ENCODE measurements at regions of chr1 and their contacts with region 1.

Region 1: DNA sequence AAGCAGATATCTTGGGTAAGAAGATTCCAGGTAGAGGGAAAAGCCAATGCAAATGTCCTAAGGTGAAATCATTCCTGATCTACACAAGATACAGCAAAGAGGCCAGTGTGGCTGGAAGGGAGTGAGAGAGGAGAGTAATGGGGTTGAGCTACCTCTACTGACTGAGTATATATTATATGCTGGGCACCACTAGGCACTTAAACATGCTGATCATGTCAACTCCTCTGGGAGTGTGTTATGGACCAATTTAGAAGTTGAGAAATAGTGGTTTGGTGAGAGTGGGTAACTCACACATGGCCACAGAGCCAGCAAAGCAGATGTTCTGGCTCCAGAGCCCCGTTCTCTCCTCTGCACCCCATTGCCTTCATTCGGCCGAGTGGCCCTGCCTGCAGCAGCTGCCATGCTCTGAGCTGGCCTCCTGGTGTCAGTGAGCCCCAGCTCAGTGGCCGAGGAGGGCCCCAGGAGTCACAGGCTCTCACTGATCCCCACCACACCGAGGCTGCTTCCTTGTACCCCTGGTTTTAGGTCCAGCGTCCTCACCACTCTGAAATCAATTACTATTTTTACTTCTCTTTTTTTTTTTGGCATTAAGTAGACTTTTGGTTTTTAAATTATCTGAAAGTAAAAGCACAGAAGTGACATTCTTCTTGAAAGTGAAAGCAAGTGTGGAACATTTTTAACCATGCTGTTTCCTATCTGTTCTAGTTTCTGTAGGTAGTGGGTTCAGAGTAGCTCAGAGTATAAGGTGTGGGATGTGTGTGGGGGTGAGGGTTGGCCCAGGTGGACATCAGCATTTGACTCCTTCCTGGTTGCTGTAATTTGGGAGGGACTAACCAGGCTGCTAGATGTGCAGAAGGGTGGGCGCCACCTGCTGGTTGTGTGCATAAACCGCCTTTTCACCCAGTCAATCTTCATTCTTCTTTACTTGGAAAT is 45.8 kb upstream of the CRNN start:
- DNase-seq: peak; percentile 81
- H3K4me3 Mint-ChIP-seq: peak overlapping the region; percentile 60
- H3K27ac Mint-ChIP-seq: peak overlapping the region; percentile 85
- H3K4me1 Mint-ChIP-seq: peaks cover 32% of the 10 kb centered on the region
- H3K27me3 Mint-ChIP-seq: peaks cover 10% of the 10 kb centered on the region

Region 2: DNA sequence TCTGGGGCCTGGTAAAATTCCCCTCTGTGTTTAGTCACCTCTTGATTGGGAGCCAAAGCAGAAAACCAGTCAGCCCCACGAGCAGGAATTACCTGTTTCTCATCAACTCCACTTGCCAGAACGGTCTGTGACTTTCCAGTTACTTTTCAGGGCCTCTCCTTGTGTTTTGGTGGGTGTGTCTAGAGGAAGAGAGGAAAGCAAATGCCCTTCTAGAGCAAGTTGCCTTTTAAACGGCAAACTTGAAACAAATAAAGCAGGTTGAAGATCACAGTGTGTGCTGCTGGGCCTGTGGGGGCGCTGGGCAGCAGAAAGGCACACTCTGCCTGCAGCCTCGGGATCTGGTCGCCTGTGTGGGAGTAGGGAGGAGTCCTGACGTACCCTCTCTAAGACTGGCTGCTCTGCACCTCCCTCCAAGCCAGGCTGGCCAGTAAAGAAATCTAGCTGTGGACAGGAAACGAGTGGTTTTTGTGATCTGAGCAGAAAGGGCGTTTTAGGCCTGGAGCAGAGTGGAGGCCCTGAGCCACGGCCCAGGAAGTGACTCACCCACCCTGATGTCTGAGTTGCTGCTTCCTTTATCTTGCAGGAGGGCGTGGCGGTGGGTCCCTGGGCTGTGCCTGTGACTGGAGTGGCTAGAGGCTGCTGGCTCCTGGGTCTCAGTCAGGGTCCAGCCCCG is 412.0 kb before region 1 on chr1:
- CTCF ChIA-PET with region 1: interaction called, 12 read pairs
- DNase-seq: peak; percentile 92
- H3K4me3 Mint-ChIP-seq: peak overlapping the region; percentile 70
- H3K27ac Mint-ChIP-seq: peak overlapping the region; percentile 98
- H3K4me1 Mint-ChIP-seq: peaks cover 54% of the 10 kb centered on the region
- H3K27me3 Mint-ChIP-seq: peaks cover 13% of the 10 kb centered on the region

Region 3: GRCh38 chr1:152189657-152190442 is 270.0 kb before region 1 on chr1:
- CTCF ChIA-PET with region 1: interaction called, 129 read pairs
- DNase-seq: peak; percentile 79
- H3K4me3 Mint-ChIP-seq: peak overlapping the region; percentile 61
- H3K27ac Mint-ChIP-seq: no peak overlapping the region
- H3K4me1 Mint-ChIP-seq: peaks cover 5% of the 10 kb centered on the region
- H3K27me3 Mint-ChIP-seq: peaks cover 35% of the 10 kb centered on the region

Region 4: DNA sequence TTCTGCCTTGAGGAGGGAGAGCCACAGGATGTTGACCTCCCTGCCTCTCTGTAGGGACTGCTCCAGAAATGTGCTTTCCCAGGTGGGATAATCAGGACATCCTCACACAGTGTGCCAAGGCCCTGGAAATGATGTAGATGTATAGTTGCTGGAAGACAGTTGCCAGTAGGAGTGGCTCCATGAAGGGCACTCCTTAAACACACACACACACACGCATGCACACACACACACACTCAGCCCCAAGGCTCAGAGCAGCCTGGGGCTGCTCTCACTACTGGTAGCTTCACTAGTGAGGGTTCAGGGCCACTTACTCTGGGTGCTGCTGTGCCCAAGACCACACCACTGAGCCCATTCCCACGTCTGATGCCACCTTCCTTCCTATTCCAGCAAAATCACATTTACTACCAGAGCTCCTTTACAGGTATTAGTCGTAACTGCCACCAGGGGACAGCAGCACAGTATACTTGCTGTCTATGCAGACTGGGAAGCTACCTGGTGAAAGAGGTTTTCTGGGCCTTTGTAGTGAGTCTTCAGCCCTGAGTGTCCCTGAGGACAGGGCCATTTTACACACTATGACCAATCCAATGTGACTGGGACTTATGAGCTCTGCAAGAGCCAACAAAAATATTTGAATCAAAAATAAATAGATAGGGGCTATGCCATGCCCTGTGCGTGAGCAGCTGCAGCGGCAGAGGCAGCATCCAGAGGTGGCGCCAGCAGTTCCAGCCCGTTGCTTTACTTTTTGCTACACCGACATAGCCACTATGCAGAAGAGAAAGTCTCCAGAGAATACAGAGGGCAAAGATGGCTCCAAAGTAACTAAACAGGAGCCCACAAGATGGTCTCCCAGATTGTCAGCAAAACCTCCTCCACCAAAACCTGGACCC is 60.8 kb before region 1 on chr1:
- CTCF ChIA-PET with region 1: interaction called, 41 read pairs
- DNase-seq: no peak
- H3K4me3 Mint-ChIP-seq: no peak overlapping the region
- H3K27ac Mint-ChIP-seq: no peak overlapping the region
- H3K4me1 Mint-ChIP-seq: no peaks in the 10 kb centered on the region
- H3K27me3 Mint-ChIP-seq: peaks cover 15% of the 10 kb centered on the region

Region 5: DNA sequence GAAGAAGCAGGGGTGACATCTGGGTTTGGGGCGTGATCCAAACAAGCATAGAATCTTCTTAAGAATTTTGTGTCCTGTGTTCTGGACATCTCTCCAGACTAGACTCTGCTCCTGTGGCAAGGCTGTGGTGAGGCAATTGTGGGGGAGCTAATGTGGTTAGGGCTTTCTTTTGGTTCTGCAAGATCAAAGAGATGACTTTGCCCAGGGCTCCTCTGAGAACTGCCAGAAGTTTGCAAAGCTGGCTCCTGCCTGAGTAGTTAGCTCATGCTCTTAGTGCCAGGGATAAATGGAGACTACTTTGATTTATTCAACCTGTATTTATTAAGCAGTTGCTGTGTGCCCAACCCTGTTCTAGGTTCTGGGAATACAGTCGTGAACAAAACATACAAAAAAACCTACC is 11.8 kb before region 1 on chr1:
- CTCF ChIA-PET with region 1: interaction called, 21 read pairs
- DNase-seq: no peak
- H3K4me3 Mint-ChIP-seq: no peak overlapping the region
- H3K27ac Mint-ChIP-seq: no peak overlapping the region
- H3K4me1 Mint-ChIP-seq: no peaks in the 10 kb centered on the region
- H3K27me3 Mint-ChIP-seq: peaks cover 8% of the 10 kb centered on the region